CD8-positive, alpha-beta T cell (primary cell): ENCODE measurements at regions of chr12 and their contacts with region 1.

Region 1: DNA sequence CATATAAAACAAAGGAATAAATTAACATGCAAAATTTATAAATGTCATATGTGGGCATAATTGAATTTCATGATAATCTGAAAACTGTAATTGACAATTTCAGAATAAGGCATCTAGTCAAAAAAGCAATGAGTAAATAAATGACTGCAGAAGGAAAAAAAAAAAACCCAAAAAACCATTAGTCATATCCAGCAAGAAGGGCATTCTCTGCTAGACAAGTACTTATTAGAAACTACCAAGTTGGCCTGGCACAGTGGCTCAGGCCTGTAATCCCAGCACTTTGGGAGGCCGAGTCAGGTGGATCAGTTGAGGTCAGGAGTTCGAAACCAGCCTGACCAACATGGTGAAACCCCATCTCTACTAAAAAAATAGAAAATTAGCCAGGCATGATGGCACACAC is 17.5 kb downstream of the ZCRB1 start:
- DNase-seq: no peak
- ATAC-seq: no peak
- H3K4me3 ChIP-seq: no peak overlapping the region
- H3K4me3 Mint-ChIP-seq: no peak overlapping the region
- H3K27ac ChIP-seq: no peak overlapping the region
- H3K27ac Mint-ChIP-seq: no peak overlapping the region
- H3K4me1 ChIP-seq: no peaks in the 10 kb centered on the region
- H3K4me1 Mint-ChIP-seq: no peaks in the 10 kb centered on the region
- H3K27me3 ChIP-seq: no peaks in the 10 kb centered on the region
- H3K27me3 Mint-ChIP-seq: no peaks in the 10 kb centered on the region
- CTCF ChIP-seq: no peak

Region 2: GRCh38 chr12:42180990-42181596 is 127.3 kb before region 1 on chr12:
- CTCF ChIA-PET with region 1: no interaction called
- POLR2A ChIA-PET with region 1: interaction called, 10 read pairs
- intact Hi-C with region 1: no loop called
- DNase-seq: no peak
- ATAC-seq: no peak
- H3K4me3 ChIP-seq: no peak overlapping the region
- H3K4me3 Mint-ChIP-seq: no peak overlapping the region
- H3K27ac ChIP-seq: no peak overlapping the region
- H3K27ac Mint-ChIP-seq: peak overlapping the region; percentile 30
- H3K4me1 ChIP-seq: no peaks in the 10 kb centered on the region
- H3K4me1 Mint-ChIP-seq: peaks cover 27% of the 10 kb centered on the region
- H3K27me3 ChIP-seq: no peaks in the 10 kb centered on the region
- H3K27me3 Mint-ChIP-seq: no peaks in the 10 kb centered on the region
- CTCF ChIP-seq: no peak

Region 3: DNA sequence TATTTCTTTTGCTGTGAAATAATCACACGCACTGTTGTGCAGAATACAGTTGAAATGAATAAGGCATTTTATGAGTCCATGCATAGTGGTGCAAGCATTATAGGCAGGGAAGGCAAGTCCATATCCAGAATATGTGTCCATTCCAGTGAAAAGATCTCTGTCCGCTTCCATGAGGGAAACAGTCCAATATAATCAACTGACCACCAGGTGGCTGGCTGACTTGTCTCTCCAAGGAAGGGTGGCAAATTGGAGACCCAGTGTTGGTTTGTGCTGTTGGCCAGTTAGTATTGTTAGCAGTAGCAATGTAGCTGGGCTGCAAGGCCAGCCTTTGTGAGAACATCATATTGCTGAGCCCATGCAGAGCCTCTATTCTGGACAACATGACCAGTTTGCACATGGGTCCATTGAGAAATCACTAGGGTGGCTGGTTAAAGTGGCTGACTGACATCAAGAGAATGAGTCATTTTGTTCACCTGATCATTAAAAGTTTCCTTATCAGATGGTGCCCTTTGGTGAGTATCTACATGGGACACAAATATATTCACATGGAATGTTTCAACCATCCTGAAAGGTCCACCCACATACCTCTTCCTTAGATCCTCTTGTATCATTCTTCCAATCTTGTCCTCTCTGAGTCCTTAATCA is 53.0 kb before region 1 on chr12:
- CTCF ChIA-PET with region 1: no interaction called
- POLR2A ChIA-PET with region 1: no interaction called
- intact Hi-C with region 1: no loop called
- DNase-seq: no peak
- ATAC-seq: no peak
- H3K4me3 ChIP-seq: no peak overlapping the region
- H3K4me3 Mint-ChIP-seq: no peak overlapping the region
- H3K27ac ChIP-seq: no peak overlapping the region
- H3K27ac Mint-ChIP-seq: no peak overlapping the region
- H3K4me1 ChIP-seq: no peaks in the 10 kb centered on the region
- H3K4me1 Mint-ChIP-seq: no peaks in the 10 kb centered on the region
- H3K27me3 ChIP-seq: no peaks in the 10 kb centered on the region
- H3K27me3 Mint-ChIP-seq: peaks cover 3% of the 10 kb centered on the region
- CTCF ChIP-seq: no peak

Region 4: DNA sequence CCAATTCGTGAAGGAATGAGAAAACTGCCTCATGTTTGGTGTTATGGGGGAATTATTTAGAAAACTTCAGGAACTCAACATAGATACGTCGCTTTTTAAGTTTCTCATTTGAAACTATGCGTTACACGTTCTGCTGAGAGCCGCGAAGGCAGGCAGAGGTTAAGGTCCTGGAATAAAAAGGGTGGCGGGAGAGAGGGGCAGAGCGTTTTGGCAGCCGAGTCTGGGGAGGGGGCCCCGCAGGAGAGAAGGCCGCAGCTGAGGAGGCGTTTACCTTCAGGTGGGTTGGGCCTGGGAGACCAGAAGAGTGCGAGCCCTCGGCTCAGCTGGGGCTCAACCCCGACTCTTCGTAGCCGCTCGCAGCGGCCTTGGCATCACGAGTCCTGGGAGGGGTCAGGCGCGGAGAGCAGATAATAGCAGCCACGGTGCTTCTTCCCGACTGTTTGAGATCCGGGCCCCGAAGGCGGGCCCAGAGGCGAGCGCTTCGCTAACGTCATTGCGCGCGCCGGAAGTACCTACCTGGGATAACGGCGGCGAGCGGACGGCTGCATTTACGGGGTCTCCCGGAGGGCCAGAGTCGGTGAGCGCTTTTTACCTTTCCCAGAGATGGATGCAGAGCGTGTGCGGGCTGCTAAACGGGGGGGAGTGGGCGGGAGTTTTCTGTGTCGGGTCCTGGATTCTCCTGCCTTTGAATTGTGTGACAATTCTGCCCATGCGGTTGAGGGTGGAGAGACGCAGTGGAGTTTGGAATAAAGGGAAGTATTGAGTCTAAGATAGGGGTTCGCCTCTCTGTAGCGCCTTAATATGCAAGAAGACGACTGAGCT is 17.5 kb after region 1 on chr12 and contains the starts of genes PPHLN1 and ZCRB1:
- CTCF ChIA-PET with region 1: no interaction called
- POLR2A ChIA-PET with region 1: no interaction called
- intact Hi-C with region 1: no loop called
- DNase-seq: peak; percentile 54 to 89 (median 78)
- ATAC-seq: peak; percentile 89
- H3K4me3 ChIP-seq: peak within 1 kb of the TSS; percentile 68 to 95
- H3K4me3 Mint-ChIP-seq: peak within 1 kb of the TSS; percentile 98
- H3K27ac ChIP-seq: peak within 1 kb of the TSS; percentile 79 to 91
- H3K27ac Mint-ChIP-seq: peak within 1 kb of the TSS; percentile 98
- H3K4me1 ChIP-seq: peaks cover 24% of the 10 kb centered on the region
- H3K4me1 Mint-ChIP-seq: peaks cover 54% of the 10 kb centered on the region
- H3K27me3 ChIP-seq: no peaks in the 10 kb centered on the region
- H3K27me3 Mint-ChIP-seq: no peaks in the 10 kb centered on the region
- CTCF ChIP-seq: no peak
- total RNA-seq, gene PPHLN1: 104 to 108 TPM
- total RNA-seq, gene ZCRB1: 35.7 to 39.4 TPM

Region 5: GRCh38 chr12:42407306-42407705 is 98.9 kb after region 1 on chr12:
- CTCF ChIA-PET with region 1: no interaction called
- POLR2A ChIA-PET with region 1: no interaction called
- intact Hi-C with region 1: no loop called
- DNase-seq: no peak
- ATAC-seq: no peak
- H3K4me3 ChIP-seq: no peak overlapping the region
- H3K4me3 Mint-ChIP-seq: no peak overlapping the region
- H3K27ac ChIP-seq: no peak overlapping the region
- H3K27ac Mint-ChIP-seq: no peak overlapping the region
- H3K4me1 ChIP-seq: no peaks in the 10 kb centered on the region
- H3K4me1 Mint-ChIP-seq: peaks cover 9% of the 10 kb centered on the region
- H3K27me3 ChIP-seq: no peaks in the 10 kb centered on the region
- H3K27me3 Mint-ChIP-seq: no peaks in the 10 kb centered on the region
- CTCF ChIP-seq: no peak